ENCODE measurements at regions of chr10 and their contacts with region 1.

Region 1: DNA sequence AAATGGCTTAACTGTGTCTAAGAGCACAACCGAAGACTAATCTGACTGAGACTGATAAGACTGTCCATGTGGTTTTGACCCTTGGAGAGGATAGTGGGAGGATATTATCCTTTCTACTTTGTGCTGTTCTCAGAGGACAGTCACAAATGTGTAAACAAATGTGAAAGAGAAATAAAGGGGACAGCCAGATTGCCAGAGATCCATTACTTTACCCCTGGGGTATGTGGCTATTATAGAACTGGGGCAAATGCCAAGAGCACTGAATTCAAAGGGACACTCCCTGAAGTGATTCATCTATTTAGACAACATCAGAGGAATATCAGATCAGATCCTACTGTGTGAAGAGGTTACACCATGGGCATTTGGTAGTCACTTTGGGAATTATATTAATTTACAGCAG is 154.7 kb downstream of the RNLS start:
- DNase-seq: no peak
- ATAC-seq: peak in 3 of 4 donors; percentile 32 to 63 (median 60)
- H3K4me3 ChIP-seq: no peak overlapping the region
- H3K27ac ChIP-seq: peak overlapping the region in 1 of 12 donors; percentile 2
- H3K4me1 ChIP-seq: peaks cover 0 to 16% (median 6%) of the 10 kb centered on the region in 12 donors
- H3K27me3 ChIP-seq: no peaks in the 10 kb centered on the region
- CTCF ChIP-seq: no peak
- POLR2A ChIP-seq: no peak

Region 2: GRCh38 chr10:88489107-88489506 is 60.7 kb after region 1 on chr10:
- intact Hi-C with region 1: loop called in 1 of 10 experiments (anchors 10 kb)
- DNase-seq: no peak
- ATAC-seq: no peak
- H3K4me3 ChIP-seq: no peak overlapping the region
- H3K27ac ChIP-seq: no peak overlapping the region
- H3K4me1 ChIP-seq: peaks cover 0 to 7% (median 0%) of the 10 kb centered on the region in 12 donors
- H3K27me3 ChIP-seq: no peaks in the 10 kb centered on the region
- CTCF ChIP-seq: no peak
- POLR2A ChIP-seq: no peak

Region 3: GRCh38 chr10:88538038-88538437 is 109.6 kb after region 1 on chr10:
- intact Hi-C with region 1: loop called in 1 of 10 experiments (anchors 10 kb)
- DNase-seq: no peak
- ATAC-seq: peak in 2 of 4 donors; percentile 35 to 48
- H3K4me3 ChIP-seq: no peak overlapping the region
- H3K27ac ChIP-seq: peak overlapping the region in 6 of 12 donors; percentile 6 to 59 (median 22)
- H3K4me1 ChIP-seq: peaks cover 0 to 23% (median 1%) of the 10 kb centered on the region in 12 donors
- H3K27me3 ChIP-seq: no peaks in the 10 kb centered on the region
- CTCF ChIP-seq: no peak
- POLR2A ChIP-seq: no peak

Region 4: GRCh38 chr10:88715517-88715916 is 287.1 kb after region 1 on chr10:
- intact Hi-C with region 1: no loop called
- DNase-seq: no peak
- ATAC-seq: no peak
- H3K4me3 ChIP-seq: no peak overlapping the region
- H3K27ac ChIP-seq: no peak overlapping the region
- H3K4me1 ChIP-seq: no peaks in the 10 kb centered on the region
- H3K27me3 ChIP-seq: peaks cover 0 to 14% (median 0%) of the 10 kb centered on the region in 9 donors
- CTCF ChIP-seq: no peak
- POLR2A ChIP-seq: no peak

Measured in heart left ventricle (tissue), 16 donors.